ENCODE measurements at regions of chr4 and their contacts with region 1.

Region 1: DNA sequence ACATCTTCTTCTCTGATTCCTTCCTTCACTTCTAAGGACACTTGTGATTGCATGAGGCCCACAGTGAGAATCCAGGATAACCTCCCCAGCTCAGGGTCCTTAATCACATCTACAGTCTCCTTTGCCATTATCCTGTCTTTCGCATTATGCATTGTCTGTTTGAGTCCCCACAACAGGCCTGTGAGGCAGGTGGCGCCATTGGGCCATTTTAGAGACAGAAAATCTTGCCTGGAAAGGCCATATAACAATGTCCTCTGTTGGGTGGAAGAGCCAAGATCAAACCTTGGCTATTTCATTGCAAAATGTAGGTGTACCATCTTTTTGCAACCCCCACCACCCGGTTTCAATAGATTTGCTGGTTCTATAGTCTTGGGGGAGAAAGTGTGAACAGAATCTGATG is 11.8 kb upstream of the DCUN1D4 start:
- DNase-seq: peak; percentile 84
- H3K4me3 Mint-ChIP-seq: no peak overlapping the region
- H3K27ac Mint-ChIP-seq: no peak overlapping the region
- H3K4me1 Mint-ChIP-seq: no peaks in the 10 kb centered on the region
- H3K27me3 Mint-ChIP-seq: peaks cover 6% of the 10 kb centered on the region

Region 2: DNA sequence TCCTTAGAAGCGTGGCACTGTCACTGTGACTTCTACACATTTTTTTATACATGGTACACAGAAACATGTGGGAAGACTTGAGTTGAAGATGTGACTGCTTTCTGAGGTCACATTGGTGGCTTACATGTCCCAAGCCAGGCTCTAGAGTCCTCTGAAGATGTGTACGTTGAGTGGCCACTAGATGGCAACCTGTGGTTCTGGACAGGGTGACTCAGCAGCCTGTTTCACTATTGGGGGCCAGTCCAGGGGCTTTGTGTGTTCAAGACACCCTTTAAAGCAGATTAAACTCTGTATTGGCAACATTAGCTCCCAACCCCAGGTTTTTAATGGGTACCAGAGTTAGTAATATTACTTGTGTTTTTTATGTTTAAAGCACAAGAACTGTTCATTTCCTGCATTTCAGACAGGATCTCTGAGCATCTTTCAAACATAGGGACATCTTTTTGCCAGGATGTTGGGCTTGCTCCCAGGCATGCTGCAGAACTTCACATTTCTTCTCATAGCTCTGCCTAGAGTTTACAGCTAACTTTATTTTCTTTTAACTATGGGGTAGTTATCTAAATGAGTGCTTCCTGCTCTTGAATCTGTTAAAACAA is 64.8 kb after region 1 on chr4:
- CTCF ChIA-PET with region 1: interaction called, 3 read pairs
- intact Hi-C with region 1: loop called (anchors 1 kb)
- DNase-seq: peak; percentile 60
- H3K4me3 Mint-ChIP-seq: no peak overlapping the region
- H3K27ac Mint-ChIP-seq: no peak overlapping the region
- H3K4me1 Mint-ChIP-seq: peaks cover 14% of the 10 kb centered on the region
- H3K27me3 Mint-ChIP-seq: no peaks in the 10 kb centered on the region

Region 3: DNA sequence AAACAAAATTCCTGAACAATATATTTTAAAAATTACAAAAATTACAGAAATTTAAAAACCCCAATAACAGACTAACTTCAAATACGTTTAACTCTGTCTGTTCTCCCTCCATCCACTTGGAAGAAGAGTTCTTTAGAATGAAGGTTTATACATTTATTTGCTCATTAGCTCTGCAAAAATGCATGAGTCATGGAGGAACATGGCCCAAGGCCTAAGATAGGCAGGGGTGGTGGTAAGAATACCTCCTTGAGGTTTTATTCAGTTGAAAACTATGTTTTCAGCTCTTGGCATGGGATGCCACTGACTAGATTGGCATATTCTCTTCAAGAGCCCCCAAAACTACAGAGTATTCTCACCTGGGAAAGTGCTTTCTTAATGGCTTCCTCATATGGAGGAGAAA is 197.8 kb after region 1 on chr4:
- CTCF ChIA-PET with region 1: interaction called, 12 read pairs
- intact Hi-C with region 1: loop called (anchors 1 kb)
- DNase-seq: no peak
- H3K4me3 Mint-ChIP-seq: no peak overlapping the region
- H3K27ac Mint-ChIP-seq: no peak overlapping the region
- H3K4me1 Mint-ChIP-seq: no peaks in the 10 kb centered on the region
- H3K27me3 Mint-ChIP-seq: no peaks in the 10 kb centered on the region

Region 4: GRCh38 chr4:52172166-52172565 is 341.0 kb after region 1 on chr4:
- CTCF ChIA-PET with region 1: no interaction called
- intact Hi-C with region 1: loop called (anchors 1 kb)
- DNase-seq: peak; percentile 8
- H3K4me3 Mint-ChIP-seq: no peak overlapping the region
- H3K27ac Mint-ChIP-seq: no peak overlapping the region
- H3K4me1 Mint-ChIP-seq: no peaks in the 10 kb centered on the region
- H3K27me3 Mint-ChIP-seq: peaks cover 4% of the 10 kb centered on the region

Measured in activated naive CD4-positive, alpha-beta T cell treated with anti-CD3 and anti-CD28 coated beads for 36 hours (primary cell).